ENCODE measurements at regions of chr5 and their contacts with region 1.

Region 1: DNA sequence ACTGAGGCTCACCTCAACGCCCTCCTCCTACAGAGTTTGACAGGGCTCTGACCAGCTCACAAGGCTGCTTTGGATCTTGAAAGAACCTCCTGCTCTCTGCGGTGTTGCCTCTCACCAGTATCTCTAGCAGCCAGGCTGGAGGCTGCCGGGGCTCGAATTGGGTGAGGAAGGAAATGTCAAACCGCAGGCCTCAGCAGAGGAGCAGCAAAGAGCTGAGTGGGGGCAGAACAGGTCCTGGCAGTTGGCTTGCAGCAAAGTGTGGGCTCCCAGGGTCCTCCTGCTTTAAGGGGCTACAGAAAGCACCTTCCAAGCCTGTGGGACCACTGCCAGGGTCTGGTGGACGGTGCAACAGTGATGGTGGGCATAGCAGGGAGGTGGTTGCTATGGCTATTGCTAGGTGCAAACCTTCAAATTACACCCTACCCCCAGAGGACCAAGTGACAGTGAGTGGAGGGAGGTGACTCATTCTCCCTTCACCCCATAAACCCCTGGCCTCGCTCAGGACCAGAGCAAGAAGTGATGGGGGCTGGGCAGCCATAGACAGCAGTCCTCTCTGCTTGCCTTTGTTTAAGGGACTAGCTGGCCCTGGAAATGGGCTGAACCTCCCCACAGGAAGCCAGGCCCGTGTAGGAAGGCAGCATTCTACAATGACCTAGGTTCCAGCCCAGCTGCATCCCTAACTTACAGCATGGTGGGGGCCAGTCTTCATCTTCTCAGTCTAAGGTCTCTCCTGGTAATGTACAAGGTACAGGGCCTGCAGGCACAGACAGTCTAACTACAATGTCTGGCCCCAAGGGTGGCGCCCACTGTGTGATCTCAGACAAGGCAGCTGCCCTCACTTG is 18.7 kb downstream of the LCP2 start:
- DNase-seq: no peak
- H3K4me3 ChIP-seq: no peak overlapping the region
- H3K27ac ChIP-seq: no peak overlapping the region; the same call in 1 of the 2 replicates
- H3K4me1 ChIP-seq: peaks cover 8 to 20% (median 18%) of the 10 kb centered on the region in 4 experiments
- H3K27me3 ChIP-seq: no peaks in the 10 kb centered on the region
- CTCF ChIP-seq: no peak
- EP300 ChIP-seq: no peak
- POLR2A ChIP-seq: no peak
- RAD21 ChIP-seq: no peak

Region 2: GRCh38 chr5:170262061-170263045 is 16.5 kb before region 1 on chr5:
- CTCF ChIA-PET with region 1: interaction called, 32 read pairs
- POLR2A ChIA-PET with region 1: no interaction called
- DNase-seq: peak in 1 of 2 experiments; percentile 41
- H3K4me3 ChIP-seq: no peak overlapping the region
- H3K27ac ChIP-seq: no peak overlapping the region
- H3K4me1 ChIP-seq: peaks cover 6 to 12% (median 8%) of the 10 kb centered on the region in 4 experiments; a peak in 4 of 7 replicates
- H3K27me3 ChIP-seq: no peaks in the 10 kb centered on the region
- CTCF ChIP-seq: no peak
- EP300 ChIP-seq: no peak
- POLR2A ChIP-seq: no peak
- RAD21 ChIP-seq: no peak

Region 3: GRCh38 chr5:170302653-170303501 is 24.0 kb after region 1 on chr5:
- CTCF ChIA-PET with region 1: interaction called, 19 read pairs
- POLR2A ChIA-PET with region 1: interaction called, 5 read pairs
- DNase-seq: no peak
- H3K4me3 ChIP-seq: no peak overlapping the region
- H3K27ac ChIP-seq: no peak overlapping the region
- H3K4me1 ChIP-seq: peaks cover 0 to 5% (median 2%) of the 10 kb centered on the region in 4 experiments; a peak in 2 of 7 replicates
- H3K27me3 ChIP-seq: no peaks in the 10 kb centered on the region; a peak in 1 of 7 replicates
- CTCF ChIP-seq: peak; percentile 7 to 32 (median 27); a peak in 3 of 4 replicates
- EP300 ChIP-seq: no peak
- POLR2A ChIP-seq: no peak
- RAD21 ChIP-seq: peak in 1 of 2 experiments; percentile 19; a peak in 1 of 4 replicates

Region 4: GRCh38 chr5:170338933-170339779 is 60.3 kb after region 1 on chr5:
- CTCF ChIA-PET with region 1: interaction called, 44 read pairs
- POLR2A ChIA-PET with region 1: no interaction called
- DNase-seq: peak in 1 of 2 experiments; percentile 72
- H3K4me3 ChIP-seq: no peak overlapping the region
- H3K27ac ChIP-seq: no peak overlapping the region
- H3K4me1 ChIP-seq: peaks cover 6 to 15% (median 11%) of the 10 kb centered on the region in 4 experiments; a peak in 6 of 7 replicates
- H3K27me3 ChIP-seq: no peaks in the 10 kb centered on the region
- CTCF ChIP-seq: peak; percentile 91 to 99 (median 92)
- EP300 ChIP-seq: no peak
- POLR2A ChIP-seq: no peak
- RAD21 ChIP-seq: peak; percentile 89 to 91

Region 5: GRCh38 chr5:170383227-170383626 is 104.4 kb after region 1 on chr5:
- CTCF ChIA-PET with region 1: interaction called, 15 read pairs
- POLR2A ChIA-PET with region 1: no interaction called
- DNase-seq: no peak
- H3K4me3 ChIP-seq: no peak overlapping the region
- H3K27ac ChIP-seq: no peak overlapping the region
- H3K4me1 ChIP-seq: peaks cover 0 to 7% (median 2%) of the 10 kb centered on the region in 4 experiments; a peak in 3 of 7 replicates
- H3K27me3 ChIP-seq: no peaks in the 10 kb centered on the region; a peak in 1 of 7 replicates
- CTCF ChIP-seq: no peak
- EP300 ChIP-seq: no peak
- POLR2A ChIP-seq: no peak
- RAD21 ChIP-seq: no peak

Region 6: GRCh38 chr5:170429014-170429413 is 150.2 kb after region 1 on chr5:
- CTCF ChIA-PET with region 1: interaction called, 36 read pairs
- POLR2A ChIA-PET with region 1: no interaction called
- DNase-seq: no peak
- H3K4me3 ChIP-seq: no peak overlapping the region
- H3K27ac ChIP-seq: no peak overlapping the region
- H3K4me1 ChIP-seq: peaks cover 0 to 6% (median 2%) of the 10 kb centered on the region in 4 experiments; a peak in 1 of 7 replicates
- H3K27me3 ChIP-seq: no peaks in the 10 kb centered on the region; a peak in 1 of 7 replicates
- CTCF ChIP-seq: peak; percentile 38 to 50 (median 40); a peak in 3 of 4 replicates
- EP300 ChIP-seq: no peak
- POLR2A ChIP-seq: no peak
- RAD21 ChIP-seq: peak in 1 of 2 experiments; percentile 49; a peak in 2 of 4 replicates

Region 7: DNA sequence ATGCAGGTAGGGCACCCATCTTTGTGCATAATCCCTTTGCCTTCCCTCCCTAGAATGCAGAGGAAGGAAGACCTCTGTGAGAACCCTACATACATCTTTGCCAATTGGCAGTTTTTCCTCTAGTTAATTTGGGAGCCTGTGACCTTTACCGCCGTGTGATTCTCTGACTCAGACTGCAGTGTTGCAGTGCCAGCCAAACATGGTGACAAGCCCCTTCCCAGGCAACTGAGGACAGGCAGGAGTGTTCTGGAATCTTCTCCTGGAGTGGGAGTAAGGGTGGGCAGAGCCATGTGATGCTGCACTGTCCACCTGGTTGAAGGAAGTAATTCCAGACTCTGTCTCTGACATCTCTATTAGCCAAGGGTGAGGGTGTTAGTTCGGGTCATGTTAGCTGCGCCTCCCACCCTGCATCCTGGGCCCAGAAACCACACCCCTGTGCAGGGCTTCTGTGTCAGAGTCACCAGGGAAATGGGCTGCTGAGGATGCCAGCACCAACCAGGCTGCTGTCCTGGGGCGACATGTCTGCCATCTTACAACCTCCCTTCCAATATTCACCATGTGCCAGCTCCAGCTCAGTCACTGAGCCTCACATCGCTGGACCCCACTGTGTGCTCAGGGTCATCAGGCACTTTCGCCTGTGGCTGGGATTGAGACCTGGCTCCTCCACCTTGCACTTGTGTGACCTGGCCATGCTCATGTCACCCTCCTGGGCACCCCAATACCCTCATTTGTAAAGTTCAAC is 246.8 kb after region 1 on chr5:
- CTCF ChIA-PET with region 1: no interaction called
- POLR2A ChIA-PET with region 1: no interaction called
- DNase-seq: no peak
- H3K4me3 ChIP-seq: no peak overlapping the region
- H3K27ac ChIP-seq: no peak overlapping the region
- H3K4me1 ChIP-seq: peaks cover 2 to 9% (median 5%) of the 10 kb centered on the region in 4 experiments; a peak in 5 of 7 replicates
- H3K27me3 ChIP-seq: no peaks in the 10 kb centered on the region
- CTCF ChIP-seq: no peak
- EP300 ChIP-seq: no peak
- POLR2A ChIP-seq: no peak
- RAD21 ChIP-seq: no peak